ENCODE measurements at regions of chr5 and their contacts with region 1.

Region 1: DNA sequence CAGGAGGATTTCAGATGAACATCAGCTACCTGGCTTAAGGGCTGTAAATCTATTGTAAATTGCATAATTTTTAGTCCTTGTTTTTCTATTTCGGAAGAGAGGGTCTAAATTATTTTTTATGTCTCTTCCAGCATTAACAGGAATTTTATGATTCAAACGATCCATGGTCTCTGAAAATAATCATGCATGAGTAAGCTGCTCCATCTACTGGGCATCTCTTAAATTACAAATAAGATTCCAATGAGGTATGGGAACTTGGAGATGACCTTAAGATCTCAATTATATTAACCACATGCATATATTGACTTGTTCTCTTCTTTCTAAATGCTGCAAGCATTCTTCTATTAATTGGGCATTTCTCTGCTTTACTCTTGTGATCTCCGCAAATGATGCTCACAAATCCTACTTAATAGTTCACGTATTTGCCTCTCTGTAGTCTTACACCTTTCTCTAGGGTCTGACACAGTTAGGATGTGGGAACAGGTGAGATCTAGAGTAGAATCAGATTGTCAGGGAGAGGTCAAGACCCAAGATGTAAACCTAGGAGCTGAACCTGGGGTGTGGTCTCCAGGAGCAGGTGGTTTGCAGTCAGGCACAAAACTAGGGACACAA is 86.9 kb downstream of the NUDT12 start:
- DNase-seq: no peak
- H3K4me3 ChIP-seq: no peak overlapping the region
- H3K27ac ChIP-seq: no peak overlapping the region
- H3K4me1 ChIP-seq: peaks cover 0 to 20% of the 10 kb centered on the region in 2 donors
- H3K27me3 ChIP-seq: no peaks in the 10 kb centered on the region
- CTCF ChIP-seq: peak; percentile 62 to 86 (median 76)
- POLR2A ChIP-seq: no peak

Region 2: DNA sequence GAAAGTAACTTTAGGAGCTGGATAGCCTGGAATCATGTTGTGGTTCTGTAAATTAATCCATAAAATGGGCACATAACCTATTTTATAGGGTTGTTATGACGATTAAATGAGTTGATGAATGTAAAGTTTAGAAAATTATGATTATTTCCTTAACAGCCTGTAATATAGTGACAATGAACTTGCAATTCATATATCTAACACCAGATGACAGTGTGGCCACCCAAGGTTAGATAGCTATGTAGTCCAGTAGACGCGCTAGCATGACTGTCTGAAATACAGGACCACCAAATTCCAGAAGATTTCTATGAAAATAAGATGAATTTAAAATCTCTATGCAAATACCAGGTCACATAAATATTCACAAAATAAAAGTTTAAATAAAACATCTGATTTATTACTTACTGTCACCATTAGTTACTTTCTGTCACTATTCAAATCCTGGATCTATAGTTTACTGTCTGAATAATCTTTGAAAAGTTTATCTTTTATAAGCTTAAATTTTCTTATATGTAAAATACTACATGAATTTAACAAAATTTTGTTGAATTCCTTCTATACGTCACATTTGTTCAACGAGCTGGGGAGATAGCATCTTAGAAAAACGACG is 243.2 kb before region 1 on chr5:
- intact Hi-C with region 1: loop called in 1 of 2 experiments (anchors 5 kb)
- DNase-seq: peak in 3 of 7 donors; percentile 28 to 40 (median 33)
- H3K4me3 ChIP-seq: no peak overlapping the region
- H3K27ac ChIP-seq: no peak overlapping the region
- H3K4me1 ChIP-seq: no peaks in the 10 kb centered on the region
- H3K27me3 ChIP-seq: no peaks in the 10 kb centered on the region
- CTCF ChIP-seq: peak; percentile 82 to 92 (median 88)
- POLR2A ChIP-seq: no peak

Region 3: GRCh38 chr5:103258368-103258956 is 217.3 kb before region 1 on chr5 and contains the start of gene MACIR:
- intact Hi-C with region 1: loop called in 1 of 2 experiments (anchors 10 kb)
- DNase-seq: peak; percentile 96 to 98 (median 98)
- H3K4me3 ChIP-seq: peak within 1 kb of the TSS; percentile 56 to 79 (median 68)
- H3K27ac ChIP-seq: peak within 1 kb of the TSS in 4 of 5 donors; percentile 63 to 85 (median 77)
- H3K4me1 ChIP-seq: peaks cover 5 to 29% of the 10 kb centered on the region in 2 donors
- H3K27me3 ChIP-seq: no peaks in the 10 kb centered on the region
- CTCF ChIP-seq: no peak
- POLR2A ChIP-seq: peak; percentile 54 to 81
- total RNA-seq, gene MACIR: 1.9 to 19.9 (median 6.9) TPM